Activated naive CD4-positive, alpha-beta T cell treated with anti-CD3 and anti-CD28 coated beads for 36 hours (primary cell): ENCODE measurements at regions of chr12 and their contacts with region 1.

Region 1: GRCh38 chr12:106247674-106248311 is at the start of gene CKAP4:
- DNase-seq: peak; percentile 60
- H3K4me3 Mint-ChIP-seq: peak within 1 kb of the TSS; percentile 75
- H3K27ac Mint-ChIP-seq: peak within 1 kb of the TSS; percentile 85
- H3K4me1 Mint-ChIP-seq: peaks cover 24% of the 10 kb centered on the region
- H3K27me3 Mint-ChIP-seq: no peaks in the 10 kb centered on the region
- total RNA-seq, gene CKAP4: 19.0 to 19.1 TPM

Region 2: DNA sequence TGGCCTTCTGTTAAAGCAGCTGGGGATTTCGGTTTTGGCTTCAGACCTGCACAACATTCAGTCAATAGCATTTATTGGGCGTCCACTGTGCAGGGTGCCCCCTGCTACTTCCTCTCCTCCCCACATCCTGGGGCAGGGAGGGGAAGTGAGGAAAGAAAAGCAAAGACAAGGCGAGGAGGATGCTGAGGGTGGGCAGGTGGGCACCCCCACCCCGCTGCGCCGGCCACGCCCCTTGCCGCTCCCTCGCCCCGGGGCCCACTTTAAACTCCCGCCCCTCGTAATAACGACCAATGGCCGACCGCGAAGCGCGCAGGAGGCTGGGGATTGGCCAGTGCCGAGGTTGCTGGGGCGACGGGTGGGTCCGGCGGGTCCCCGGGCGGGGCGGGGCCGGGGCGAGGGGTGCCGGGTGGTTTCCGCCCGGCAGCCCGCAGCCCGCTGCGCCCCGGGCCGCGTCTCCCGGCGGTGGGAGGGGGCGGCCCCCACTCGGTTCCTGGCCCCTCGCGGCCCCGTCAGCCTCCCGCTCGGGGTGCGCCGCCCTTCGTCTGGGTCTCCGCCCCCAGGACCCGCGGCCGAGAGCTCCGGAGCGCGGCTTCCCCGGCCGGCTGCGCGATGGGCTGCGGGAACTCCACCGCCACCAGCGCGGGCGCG is 917.4 kb before region 1 on chr12 and contains the start of gene C12orf75:
- CTCF ChIA-PET with region 1: no interaction called
- intact Hi-C with region 1: loop called (anchors 2 kb)
- DNase-seq: peak; percentile 86
- H3K4me3 Mint-ChIP-seq: peak within 1 kb of the TSS; percentile 76
- H3K27ac Mint-ChIP-seq: peak within 1 kb of the TSS; percentile 14
- H3K4me1 Mint-ChIP-seq: peaks cover 35% of the 10 kb centered on the region
- H3K27me3 Mint-ChIP-seq: no peaks in the 10 kb centered on the region
- total RNA-seq, gene C12orf75: 41.1 to 48.5 TPM

Region 3: DNA sequence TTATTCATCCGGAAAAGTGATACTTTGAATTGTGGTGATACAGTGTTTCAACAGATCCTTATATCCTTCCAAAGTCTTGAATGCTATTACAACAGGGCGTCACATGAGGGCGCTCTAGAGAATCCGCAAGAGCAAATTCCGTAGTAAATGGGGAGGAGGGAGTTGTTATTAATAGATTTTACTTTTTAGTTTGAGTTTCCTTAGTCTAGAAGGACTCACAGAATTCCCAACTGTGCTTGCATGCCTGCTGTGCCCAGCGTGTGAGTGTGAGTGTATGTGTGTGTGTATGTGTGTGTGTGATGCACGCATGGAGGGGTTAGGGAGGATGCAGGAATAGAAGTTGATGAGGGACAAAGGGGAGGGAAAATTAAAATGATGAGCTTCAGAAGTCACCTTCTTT is 542.0 kb before region 1 on chr12:
- CTCF ChIA-PET with region 1: no interaction called
- intact Hi-C with region 1: no loop called
- DNase-seq: peak; percentile 24
- H3K4me3 Mint-ChIP-seq: no peak overlapping the region
- H3K27ac Mint-ChIP-seq: no peak overlapping the region
- H3K4me1 Mint-ChIP-seq: no peaks in the 10 kb centered on the region
- H3K27me3 Mint-ChIP-seq: peaks cover 4% of the 10 kb centered on the region

Region 4: GRCh38 chr12:106274575-106275121 is 26.9 kb after region 1 on chr12:
- CTCF ChIA-PET with region 1: no interaction called
- intact Hi-C with region 1: no loop called
- DNase-seq: no peak
- H3K4me3 Mint-ChIP-seq: no peak overlapping the region
- H3K27ac Mint-ChIP-seq: no peak overlapping the region
- H3K4me1 Mint-ChIP-seq: no peaks in the 10 kb centered on the region
- H3K27me3 Mint-ChIP-seq: no peaks in the 10 kb centered on the region

Region 5: GRCh38 chr12:106302401-106303201 is 54.8 kb after region 1 on chr12 and contains the start of gene TCP11L2:
- CTCF ChIA-PET with region 1: interaction called, 3 read pairs
- intact Hi-C with region 1: loop called (anchors 1 kb)
- DNase-seq: peak; percentile 88
- H3K4me3 Mint-ChIP-seq: peak within 1 kb of the TSS; percentile 93
- H3K27ac Mint-ChIP-seq: peak within 1 kb of the TSS; percentile 99
- H3K4me1 Mint-ChIP-seq: peaks cover 55% of the 10 kb centered on the region
- H3K27me3 Mint-ChIP-seq: no peaks in the 10 kb centered on the region
- total RNA-seq, gene TCP11L2: 9.2 to 10.3 TPM

Region 6: DNA sequence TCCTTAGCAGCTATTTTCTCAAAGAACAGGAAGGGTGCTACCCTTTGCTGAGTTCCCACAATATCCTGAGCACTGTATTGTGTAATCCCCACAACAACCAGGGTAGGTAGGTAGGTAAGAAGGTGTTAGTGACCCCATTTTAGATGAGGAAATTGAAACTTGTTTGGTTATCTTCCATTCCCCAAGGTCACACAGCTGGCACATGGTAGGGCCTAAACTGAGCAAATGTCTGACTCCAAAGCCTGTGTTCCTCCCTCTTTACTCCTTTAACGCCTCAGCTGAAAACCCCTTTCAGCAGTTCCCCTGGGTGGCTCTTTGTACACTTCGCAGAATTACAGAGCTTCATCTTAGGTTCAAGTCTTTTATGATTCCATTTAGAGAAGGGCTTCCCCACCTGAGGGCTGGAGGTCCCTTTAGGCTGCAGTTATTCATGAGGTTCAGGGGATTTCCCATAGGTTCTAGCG is 500.2 kb after region 1 on chr12:
- CTCF ChIA-PET with region 1: no interaction called
- intact Hi-C with region 1: loop called (anchors 5 kb)
- DNase-seq: peak; percentile 63
- H3K4me3 Mint-ChIP-seq: peak overlapping the region; percentile 12
- H3K27ac Mint-ChIP-seq: peak overlapping the region; percentile 90
- H3K4me1 Mint-ChIP-seq: peaks cover 32% of the 10 kb centered on the region
- H3K27me3 Mint-ChIP-seq: no peaks in the 10 kb centered on the region

Region 7: GRCh38 chr12:106955377-106956047 is 707.7 kb after region 1 on chr12 and contains the start of gene TMEM263:
- CTCF ChIA-PET with region 1: no interaction called
- intact Hi-C with region 1: loop called (anchors 5 kb)
- DNase-seq: peak; percentile 87
- H3K4me3 Mint-ChIP-seq: peak within 1 kb of the TSS; percentile 99
- H3K27ac Mint-ChIP-seq: peak within 1 kb of the TSS; percentile 91
- H3K4me1 Mint-ChIP-seq: peaks cover 14% of the 10 kb centered on the region
- H3K27me3 Mint-ChIP-seq: no peaks in the 10 kb centered on the region
- total RNA-seq, gene TMEM263: 29.1 to 30.4 TPM